ENCODE measurements at regions of chr2 and their contacts with region 1.

Region 1: GRCh38 chr2:229586746-229587705 is 127.3 kb downstream of the DNER start:
- DNase-seq: peak; percentile 93
- ATAC-seq: peak; percentile 89
- H3K4me3 ChIP-seq: peak overlapping the region; percentile 55
- H3K27ac ChIP-seq: peak overlapping the region; percentile 98
- H3K4me1 ChIP-seq: peaks cover 14% of the 10 kb centered on the region
- H3K27me3 ChIP-seq: no peaks in the 10 kb centered on the region
- CTCF ChIP-seq: peak; percentile 91

Region 2: DNA sequence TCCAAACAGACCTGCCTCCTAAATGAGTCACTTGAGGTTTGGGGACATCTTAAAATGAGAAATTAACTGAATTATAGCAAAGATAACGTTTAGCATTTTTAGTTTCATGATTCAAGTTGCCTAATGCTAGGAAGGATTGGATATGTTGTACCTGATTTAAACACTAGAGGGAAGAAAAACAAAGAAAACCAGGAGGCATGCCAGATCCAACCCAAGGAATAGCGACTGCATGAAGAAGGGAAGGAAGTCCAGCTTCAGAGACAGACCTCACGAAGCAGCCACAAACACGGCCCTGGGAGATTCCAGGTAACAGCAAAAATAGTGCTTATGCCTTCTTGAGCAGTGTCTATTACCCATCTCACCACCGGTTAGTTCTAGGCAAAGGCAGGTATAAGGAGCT is 905.6 kb before region 1 on chr2:
- CTCF ChIA-PET with region 1: no interaction called
- POLR2A ChIA-PET with region 1: no interaction called
- intact Hi-C with region 1: loop called (anchors 10 kb)
- DNase-seq: peak; percentile 66
- ATAC-seq: peak; percentile 61
- H3K4me3 ChIP-seq: no peak overlapping the region
- H3K27ac ChIP-seq: no peak overlapping the region
- H3K4me1 ChIP-seq: no peaks in the 10 kb centered on the region
- H3K27me3 ChIP-seq: 0 out of 2 replicates have a peak, but pooled peaks cover 8% of the 10 kb centered on the region
- CTCF ChIP-seq: peak; percentile 66

Region 3: GRCh38 chr2:229273723-229274338 is 313.2 kb before region 1 on chr2:
- CTCF ChIA-PET with region 1: interaction called, 7 read pairs
- POLR2A ChIA-PET with region 1: no interaction called
- intact Hi-C with region 1: loop called (anchors 2 kb)
- DNase-seq: peak; percentile 85
- ATAC-seq: peak; percentile 89
- H3K4me3 ChIP-seq: peak overlapping the region; percentile 52
- H3K27ac ChIP-seq: no peak overlapping the region
- H3K4me1 ChIP-seq: peaks cover 8% of the 10 kb centered on the region; the same call in 1 of the 2 replicates
- H3K27me3 ChIP-seq: peaks cover 16% of the 10 kb centered on the region; the same call in 1 of the 2 replicates
- CTCF ChIP-seq: peak; percentile 84

Region 4: DNA sequence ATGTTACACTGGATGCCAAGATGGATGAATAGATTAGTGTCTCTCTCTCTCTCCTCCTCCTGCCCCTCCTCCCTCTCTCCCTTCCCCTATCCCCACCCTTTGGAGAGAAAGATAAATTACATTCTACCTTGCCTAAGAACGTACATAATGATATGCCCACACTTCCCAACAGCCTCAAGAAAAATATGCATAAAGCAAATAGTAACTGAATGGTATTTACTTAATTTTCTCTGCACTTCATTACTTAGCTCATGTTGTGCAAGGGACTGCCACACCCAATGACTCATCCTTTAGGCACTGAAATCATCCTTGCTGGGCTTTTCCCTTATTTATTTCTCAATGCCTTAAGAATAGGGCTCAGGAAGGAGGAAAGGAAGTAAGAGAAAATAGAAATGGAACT is 178.7 kb before region 1 on chr2:
- CTCF ChIA-PET with region 1: interaction called, 3 read pairs
- POLR2A ChIA-PET with region 1: no interaction called
- intact Hi-C with region 1: loop called (anchors 1 kb)
- DNase-seq: peak; percentile 96
- ATAC-seq: peak; percentile 81
- H3K4me3 ChIP-seq: no peak overlapping the region
- H3K27ac ChIP-seq: peak overlapping the region; percentile 99
- H3K4me1 ChIP-seq: peaks cover 46% of the 10 kb centered on the region
- H3K27me3 ChIP-seq: no peaks in the 10 kb centered on the region
- CTCF ChIP-seq: no peak

Region 5: GRCh38 chr2:229445019-229445418 is 142.0 kb before region 1 on chr2:
- CTCF ChIA-PET with region 1: interaction called, 9 read pairs
- POLR2A ChIA-PET with region 1: no interaction called
- intact Hi-C with region 1: loop called (anchors 5 kb)
- DNase-seq: peak; percentile 93
- ATAC-seq: peak; percentile 100
- H3K4me3 ChIP-seq: no peak overlapping the region
- H3K27ac ChIP-seq: peak overlapping the region; percentile 81
- H3K4me1 ChIP-seq: peaks cover 16% of the 10 kb centered on the region
- H3K27me3 ChIP-seq: no peaks in the 10 kb centered on the region
- CTCF ChIP-seq: peak; percentile 46

Measured in PC-3 (cell line).